ENCODE measurements at regions of chr9 and their contacts with region 1.

Region 1: DNA sequence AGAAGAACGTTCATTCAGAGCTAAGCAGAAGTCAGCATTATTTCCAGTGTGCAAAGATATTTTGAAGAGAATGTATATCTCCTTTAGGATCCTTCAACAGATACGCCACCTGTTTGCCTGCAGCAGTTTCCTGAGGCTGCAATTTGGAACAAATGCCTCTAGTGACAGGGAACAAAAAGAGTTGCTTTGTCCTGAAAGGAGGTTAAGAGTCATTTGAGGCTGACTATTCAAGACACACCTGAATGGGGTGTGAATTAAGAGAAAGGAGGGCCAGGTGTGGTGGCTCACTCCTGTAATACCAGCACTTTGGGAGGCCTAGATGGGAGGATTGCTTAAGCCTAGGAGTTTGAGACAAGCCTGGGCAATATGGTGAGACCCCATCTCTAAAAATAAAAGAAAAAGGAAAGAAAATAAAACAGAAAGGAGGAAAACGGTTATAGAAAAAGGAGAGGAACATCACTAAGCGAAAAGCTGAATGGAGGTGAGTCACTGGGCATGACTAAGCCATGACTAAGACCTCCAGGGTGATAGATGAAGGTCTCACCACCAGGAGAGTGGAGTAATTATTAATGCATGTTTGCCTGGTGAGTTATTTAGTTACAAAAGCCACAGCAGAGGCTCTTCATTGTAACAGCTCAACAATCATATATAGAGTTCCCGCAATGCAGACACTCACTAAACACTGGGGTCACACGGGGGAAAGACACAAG is 255.2 kb upstream of the TNC start:
- DNase-seq: peak; percentile 96
- ATAC-seq: peak; percentile 95
- H3K4me3 ChIP-seq: peak overlapping the region; percentile 47; the same call in 1 of the 2 replicates
- H3K27ac ChIP-seq: peak overlapping the region; percentile 96
- H3K4me1 ChIP-seq: peaks cover 31% of the 10 kb centered on the region
- H3K27me3 ChIP-seq: no peaks in the 10 kb centered on the region
- CTCF ChIP-seq: no peak

Region 2: GRCh38 chr9:115226127-115226526 is 147.0 kb before region 1 on chr9:
- CTCF ChIA-PET with region 1: no interaction called
- POLR2A ChIA-PET with region 1: no interaction called
- intact Hi-C with region 1: loop called (anchors 1 kb)
- DNase-seq: peak; percentile 47
- ATAC-seq: no peak
- H3K4me3 ChIP-seq: no peak overlapping the region
- H3K27ac ChIP-seq: no peak overlapping the region
- H3K4me1 ChIP-seq: no peaks in the 10 kb centered on the region
- H3K27me3 ChIP-seq: no peaks in the 10 kb centered on the region
- CTCF ChIP-seq: peak; percentile 66

Region 3: DNA sequence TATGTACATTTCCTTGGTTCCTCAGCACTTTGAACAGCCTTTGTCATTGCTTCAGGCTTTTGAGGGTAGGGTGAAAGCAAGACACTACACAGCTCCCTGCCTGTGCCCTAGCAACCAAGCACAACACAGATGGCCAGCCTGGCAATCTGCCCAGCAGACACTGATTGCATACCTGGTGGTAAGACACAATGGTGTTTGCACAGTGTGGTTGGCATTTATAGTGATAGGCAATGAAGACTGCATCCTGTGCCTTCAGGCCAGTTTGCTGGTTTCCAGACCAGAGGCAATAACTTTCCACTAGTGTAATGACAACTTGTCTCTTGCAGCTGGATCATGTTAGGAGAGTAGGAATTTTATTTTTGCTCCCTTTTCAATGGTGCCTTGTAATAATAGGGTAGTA is 110.7 kb before region 1 on chr9:
- CTCF ChIA-PET with region 1: no interaction called
- POLR2A ChIA-PET with region 1: no interaction called
- intact Hi-C with region 1: loop called (anchors 1 kb)
- DNase-seq: peak; percentile 99
- ATAC-seq: peak; percentile 83
- H3K4me3 ChIP-seq: 0 out of 2 replicates have a peak overlapping the region, but pooled peaks have one; percentile 24
- H3K27ac ChIP-seq: peak overlapping the region; percentile 99
- H3K4me1 ChIP-seq: peaks cover 49% of the 10 kb centered on the region
- H3K27me3 ChIP-seq: no peaks in the 10 kb centered on the region
- CTCF ChIP-seq: no peak

Region 4: GRCh38 chr9:115328228-115328627 is 44.9 kb before region 1 on chr9:
- CTCF ChIA-PET with region 1: no interaction called
- POLR2A ChIA-PET with region 1: no interaction called
- intact Hi-C with region 1: no loop called
- DNase-seq: no peak
- ATAC-seq: no peak
- H3K4me3 ChIP-seq: no peak overlapping the region
- H3K27ac ChIP-seq: no peak overlapping the region
- H3K4me1 ChIP-seq: peaks cover under 1% of the 10 kb centered on the region; the same call in 1 of the 2 replicates
- H3K27me3 ChIP-seq: no peaks in the 10 kb centered on the region
- CTCF ChIP-seq: no peak

Region 5: DNA sequence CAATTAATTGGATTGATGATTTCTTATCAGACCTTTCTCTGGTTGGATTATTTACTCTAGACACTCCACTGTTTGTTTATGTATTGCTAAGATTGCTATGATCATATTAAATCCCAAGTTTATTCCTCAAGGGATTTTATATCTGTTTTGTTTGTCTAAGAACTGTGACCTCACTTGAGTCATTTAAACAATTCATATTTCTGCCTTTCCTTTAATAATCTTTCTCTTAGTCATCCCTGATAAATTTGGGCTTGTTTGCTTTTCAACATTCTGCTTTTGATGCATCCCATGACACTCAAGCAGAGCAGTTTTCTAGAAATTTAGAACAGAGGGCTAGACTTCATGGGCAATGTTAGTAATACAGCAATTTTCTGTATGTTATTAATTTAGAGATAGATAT is 23.6 kb before region 1 on chr9:
- CTCF ChIA-PET with region 1: no interaction called
- POLR2A ChIA-PET with region 1: no interaction called
- intact Hi-C with region 1: loop called (anchors 1 kb)
- DNase-seq: peak; percentile 85
- ATAC-seq: peak; percentile 86
- H3K4me3 ChIP-seq: no peak overlapping the region
- H3K27ac ChIP-seq: peak overlapping the region; percentile 65
- H3K4me1 ChIP-seq: peaks cover 33% of the 10 kb centered on the region
- H3K27me3 ChIP-seq: no peaks in the 10 kb centered on the region
- CTCF ChIP-seq: no peak

Region 6: GRCh38 chr9:115495052-115495635 is 122.0 kb after region 1 on chr9:
- CTCF ChIA-PET with region 1: interaction called, 3 read pairs
- POLR2A ChIA-PET with region 1: no interaction called
- intact Hi-C with region 1: loop called (anchors 10 kb)
- DNase-seq: peak; percentile 80
- ATAC-seq: peak; percentile 42
- H3K4me3 ChIP-seq: 0 out of 2 replicates have a peak overlapping the region, but pooled peaks have one; percentile 2
- H3K27ac ChIP-seq: peak overlapping the region; percentile 77
- H3K4me1 ChIP-seq: peaks cover 43% of the 10 kb centered on the region
- H3K27me3 ChIP-seq: no peaks in the 10 kb centered on the region
- CTCF ChIP-seq: no peak

Region 7: DNA sequence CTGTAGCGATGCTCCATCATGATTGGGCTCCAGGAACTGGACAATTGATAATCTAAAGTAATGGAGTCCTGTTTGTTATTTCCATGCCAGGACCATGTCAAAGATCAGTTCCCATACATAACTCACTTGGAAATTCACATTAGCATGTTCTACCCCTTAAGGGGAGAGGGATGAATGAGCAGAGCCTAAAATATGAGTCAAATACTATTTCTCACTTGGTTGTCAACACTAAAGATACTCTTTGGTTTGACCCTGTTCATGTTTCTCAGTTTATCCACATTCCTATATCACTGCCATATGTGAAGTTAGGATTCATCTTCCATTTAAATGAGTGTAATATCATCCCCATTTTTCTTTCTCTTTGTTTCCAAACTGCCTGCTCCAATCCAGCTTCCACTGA is 458.9 kb after region 1 on chr9:
- CTCF ChIA-PET with region 1: no interaction called
- POLR2A ChIA-PET with region 1: no interaction called
- intact Hi-C with region 1: no loop called
- DNase-seq: no peak
- ATAC-seq: no peak
- H3K4me3 ChIP-seq: no peak overlapping the region
- H3K27ac ChIP-seq: no peak overlapping the region
- H3K4me1 ChIP-seq: no peaks in the 10 kb centered on the region
- H3K27me3 ChIP-seq: no peaks in the 10 kb centered on the region
- CTCF ChIP-seq: no peak